Endothelial cell of umbilical vein (primary cell): ENCODE measurements at regions of chr11 and their contacts with region 1.

Region 1: GRCh38 chr11:110092515-110093404 is at the start of gene ZC3H12C:
- DNase-seq: peak; percentile 89
- H3K4me3 ChIP-seq: peak within 1 kb of the TSS; percentile 58 to 92 (median 88)
- H3K27ac ChIP-seq: peak within 1 kb of the TSS; percentile 81
- H3K4me1 ChIP-seq: peaks cover 22% of the 10 kb centered on the region
- H3K27me3 ChIP-seq: peaks cover 2 to 3% of the 10 kb centered on the region in 2 experiments
- CTCF ChIP-seq: peak; percentile 54 to 60
- POLR2A ChIP-seq: peak; percentile 32
- total RNA-seq, gene ZC3H12C: 14.5 and 14.7 TPM in 2 replicates

Region 2: DNA sequence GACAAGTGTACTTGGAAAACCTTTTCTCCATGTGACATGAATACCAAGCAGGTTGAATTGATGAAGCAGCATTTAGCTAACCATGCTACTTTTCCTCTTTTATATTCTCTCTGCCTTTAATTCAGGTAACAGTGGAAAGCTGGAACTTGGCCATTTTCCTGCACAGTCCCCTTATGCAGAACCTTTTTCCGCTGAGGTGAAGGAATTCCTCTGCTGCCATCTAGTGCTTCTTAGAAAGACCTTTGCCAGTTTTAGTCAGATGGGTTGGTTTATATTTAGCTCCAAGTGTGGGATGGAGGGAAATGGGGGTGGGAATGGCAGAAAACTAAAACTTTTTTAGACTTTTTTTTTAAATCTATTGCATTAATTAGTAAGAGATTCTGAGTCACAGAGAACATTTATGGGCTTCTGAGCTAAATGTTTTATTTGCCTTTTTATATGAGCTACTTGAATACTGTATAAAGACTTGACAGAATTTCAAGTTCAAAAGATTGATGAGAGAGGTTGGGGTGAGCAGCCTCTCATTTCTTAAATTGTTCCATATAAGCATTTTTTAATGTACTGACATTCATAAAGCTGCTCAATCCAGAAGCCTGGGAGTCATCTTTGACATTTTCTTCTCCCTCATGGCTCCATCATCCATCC is 153.5 kb before region 1 on chr11:
- CTCF ChIA-PET with region 1: interaction called, 21 read pairs
- POLR2A ChIA-PET with region 1: no interaction called
- dilution Hi-C with region 1: no loop called
- intact Hi-C with region 1: no loop called
- DNase-seq: peak; percentile 80
- H3K4me3 ChIP-seq: no peak overlapping the region
- H3K27ac ChIP-seq: no peak overlapping the region
- H3K4me1 ChIP-seq: no peaks in the 10 kb centered on the region
- H3K27me3 ChIP-seq: no peaks in the 10 kb centered on the region
- CTCF ChIP-seq: peak; percentile 57 to 61
- POLR2A ChIP-seq: no peak

Region 3: GRCh38 chr11:109971184-109971523 is 121.6 kb before region 1 on chr11:
- CTCF ChIA-PET with region 1: interaction called, 6 read pairs
- POLR2A ChIA-PET with region 1: interaction called, 6 read pairs
- dilution Hi-C with region 1: no loop called
- intact Hi-C with region 1: loop called (anchors 1 kb)
- DNase-seq: peak; percentile 94
- H3K4me3 ChIP-seq: peak overlapping the region in 1 of 3 experiments; percentile 53
- H3K27ac ChIP-seq: peak overlapping the region; percentile 76
- H3K4me1 ChIP-seq: peaks cover 23% of the 10 kb centered on the region
- H3K27me3 ChIP-seq: no peaks in the 10 kb centered on the region
- CTCF ChIP-seq: no peak
- POLR2A ChIP-seq: no peak

Region 4: GRCh38 chr11:110077831-110078325 is 14.9 kb before region 1 on chr11:
- CTCF ChIA-PET with region 1: interaction called, 13 read pairs
- POLR2A ChIA-PET with region 1: no interaction called
- dilution Hi-C with region 1: no loop called
- intact Hi-C with region 1: no loop called
- DNase-seq: peak; percentile 68
- H3K4me3 ChIP-seq: no peak overlapping the region
- H3K27ac ChIP-seq: peak overlapping the region; percentile 45
- H3K4me1 ChIP-seq: peaks cover 22% of the 10 kb centered on the region
- H3K27me3 ChIP-seq: no peaks in the 10 kb centered on the region
- CTCF ChIP-seq: no peak
- POLR2A ChIP-seq: no peak

Region 5: GRCh38 chr11:110130642-110131238 is 38.0 kb after region 1 on chr11:
- CTCF ChIA-PET with region 1: no interaction called
- POLR2A ChIA-PET with region 1: no interaction called
- dilution Hi-C with region 1: no loop called
- intact Hi-C with region 1: no loop called
- DNase-seq: peak; percentile 62
- H3K4me3 ChIP-seq: no peak overlapping the region
- H3K27ac ChIP-seq: no peak overlapping the region
- H3K4me1 ChIP-seq: no peaks in the 10 kb centered on the region
- H3K27me3 ChIP-seq: no peaks in the 10 kb centered on the region
- CTCF ChIP-seq: no peak
- POLR2A ChIP-seq: no peak

Region 6: DNA sequence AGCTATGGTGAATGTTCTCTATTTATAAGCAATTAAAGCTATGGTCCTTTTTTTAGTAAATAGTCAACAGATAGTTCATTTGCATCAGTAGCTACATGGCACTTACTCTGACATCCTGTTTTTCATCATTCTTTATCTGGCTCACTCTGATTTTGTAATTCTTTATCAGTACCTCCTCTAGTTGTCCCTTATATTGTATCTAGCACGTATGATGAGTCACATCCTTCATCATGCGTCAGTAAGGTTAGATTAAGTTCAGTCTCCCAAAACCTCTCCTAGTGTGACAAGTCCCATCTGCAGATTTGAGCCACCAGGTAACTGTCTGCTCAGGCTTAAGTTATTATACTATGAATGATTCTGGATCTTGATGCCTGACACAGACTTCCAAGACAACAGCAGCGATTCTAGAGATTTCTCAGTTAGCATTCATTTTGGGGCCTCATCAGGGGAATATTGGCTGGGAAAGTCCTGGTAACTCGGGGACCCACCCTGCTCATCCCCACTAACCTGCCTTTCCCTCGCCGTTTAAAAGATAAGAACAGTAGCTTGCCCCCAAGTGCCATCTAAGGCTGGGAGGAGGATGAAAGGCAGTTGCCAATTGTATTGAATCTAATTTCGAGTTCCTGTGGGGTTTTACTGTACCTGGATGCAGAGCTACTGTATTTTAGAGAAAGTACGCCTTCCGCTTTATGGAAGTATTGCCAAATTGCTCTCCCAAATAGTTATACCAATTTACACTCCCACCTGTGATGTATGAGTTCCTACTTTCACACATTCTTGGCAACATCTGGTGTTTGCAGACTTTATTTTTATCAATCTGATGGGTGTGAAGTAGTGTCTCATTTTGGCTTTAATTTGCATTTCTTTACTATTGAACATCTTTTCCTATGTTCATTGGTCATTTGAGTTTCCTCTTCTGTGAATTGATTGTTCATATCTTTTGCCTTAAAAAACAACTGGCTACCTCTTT is 56.3 kb after region 1 on chr11:
- CTCF ChIA-PET with region 1: no interaction called
- POLR2A ChIA-PET with region 1: no interaction called
- dilution Hi-C with region 1: no loop called
- intact Hi-C with region 1: loop called (anchors 1 kb)
- DNase-seq: peak; percentile 79
- H3K4me3 ChIP-seq: no peak overlapping the region
- H3K27ac ChIP-seq: peak overlapping the region; percentile 74
- H3K4me1 ChIP-seq: peaks cover 33% of the 10 kb centered on the region
- H3K27me3 ChIP-seq: no peaks in the 10 kb centered on the region
- CTCF ChIP-seq: no peak
- POLR2A ChIP-seq: no peak

Region 7: GRCh38 chr11:110317516-110317932 is 224.8 kb after region 1 on chr11:
- CTCF ChIA-PET with region 1: no interaction called
- POLR2A ChIA-PET with region 1: no interaction called
- dilution Hi-C with region 1: no loop called
- intact Hi-C with region 1: loop called (anchors 10 kb)
- DNase-seq: peak; percentile 98
- H3K4me3 ChIP-seq: no peak overlapping the region
- H3K27ac ChIP-seq: peak overlapping the region; percentile 93
- H3K4me1 ChIP-seq: peaks cover 48% of the 10 kb centered on the region
- H3K27me3 ChIP-seq: no peaks in the 10 kb centered on the region
- CTCF ChIP-seq: no peak
- POLR2A ChIP-seq: peak; percentile 55

Region 8: DNA sequence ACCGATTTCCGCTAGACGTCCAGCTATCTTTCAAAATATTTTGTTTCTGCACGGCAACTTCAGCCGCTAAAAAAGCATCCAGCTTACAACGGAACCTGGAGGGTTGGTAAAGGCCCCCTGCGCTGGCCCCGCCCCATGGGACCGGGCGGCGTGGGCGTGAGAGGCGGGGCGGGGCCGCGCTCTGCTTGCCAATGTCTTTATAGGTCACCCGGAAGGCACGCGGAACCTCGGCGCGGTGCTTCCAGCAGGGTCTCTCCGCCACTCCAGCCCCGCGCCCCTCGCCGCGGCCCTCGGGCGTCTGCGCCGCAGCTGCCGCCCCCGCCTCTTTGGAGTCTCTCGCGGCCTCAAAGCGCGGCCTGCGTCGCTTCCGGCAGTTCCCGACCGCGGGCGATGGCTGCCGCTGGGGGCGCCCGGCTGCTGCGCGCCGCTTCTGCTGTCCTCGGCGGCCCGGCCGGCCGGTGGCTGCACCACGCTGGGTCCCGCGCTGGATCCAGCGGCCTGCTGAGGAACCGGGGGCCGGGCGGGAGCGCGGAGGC is 337.0 kb after region 1 on chr11 and contains the start of gene FDX1:
- CTCF ChIA-PET with region 1: interaction called, 3 read pairs
- POLR2A ChIA-PET with region 1: no interaction called
- dilution Hi-C with region 1: no loop called
- intact Hi-C with region 1: loop called (anchors 2 kb)
- DNase-seq: peak; percentile 84
- H3K4me3 ChIP-seq: peak within 1 kb of the TSS; percentile 23 to 75 (median 57)
- H3K27ac ChIP-seq: peak within 1 kb of the TSS; percentile 72
- H3K4me1 ChIP-seq: peaks cover 27% of the 10 kb centered on the region
- H3K27me3 ChIP-seq: no peaks in the 10 kb centered on the region
- CTCF ChIP-seq: peak; percentile 50 to 59
- POLR2A ChIP-seq: no peak
- total RNA-seq, gene FDX1: 9.9 and 11.0 TPM in 2 replicates